Activated naive CD4-positive, alpha-beta T cell treated with anti-CD3 and anti-CD28 coated beads for 36 hours (primary cell): ENCODE measurements at regions of chr1 and their contacts with region 1.

Region 1: GRCh38 chr1:184982002-184982954 is 8.0 kb upstream of the NIBAN1 start:
- DNase-seq: peak; percentile 84
- H3K4me3 Mint-ChIP-seq: no peak overlapping the region
- H3K27ac Mint-ChIP-seq: no peak overlapping the region
- H3K4me1 Mint-ChIP-seq: no peaks in the 10 kb centered on the region
- H3K27me3 Mint-ChIP-seq: peaks cover 17% of the 10 kb centered on the region

Region 2: GRCh38 chr1:184805667-184806295 is 176.5 kb before region 1 on chr1:
- CTCF ChIA-PET with region 1: interaction called, 147 read pairs
- intact Hi-C with region 1: loop called (anchors 1 kb)
- DNase-seq: peak; percentile 90
- H3K4me3 Mint-ChIP-seq: no peak overlapping the region
- H3K27ac Mint-ChIP-seq: peak overlapping the region; percentile 6
- H3K4me1 Mint-ChIP-seq: peaks cover 2% of the 10 kb centered on the region
- H3K27me3 Mint-ChIP-seq: no peaks in the 10 kb centered on the region

Region 3: GRCh38 chr1:184892116-184892515 is 90.2 kb before region 1 on chr1:
- CTCF ChIA-PET with region 1: interaction called, 12 read pairs
- intact Hi-C with region 1: no loop called
- DNase-seq: no peak
- H3K4me3 Mint-ChIP-seq: no peak overlapping the region
- H3K27ac Mint-ChIP-seq: no peak overlapping the region
- H3K4me1 Mint-ChIP-seq: peaks cover 30% of the 10 kb centered on the region
- H3K27me3 Mint-ChIP-seq: peaks cover 3% of the 10 kb centered on the region

Region 4: DNA sequence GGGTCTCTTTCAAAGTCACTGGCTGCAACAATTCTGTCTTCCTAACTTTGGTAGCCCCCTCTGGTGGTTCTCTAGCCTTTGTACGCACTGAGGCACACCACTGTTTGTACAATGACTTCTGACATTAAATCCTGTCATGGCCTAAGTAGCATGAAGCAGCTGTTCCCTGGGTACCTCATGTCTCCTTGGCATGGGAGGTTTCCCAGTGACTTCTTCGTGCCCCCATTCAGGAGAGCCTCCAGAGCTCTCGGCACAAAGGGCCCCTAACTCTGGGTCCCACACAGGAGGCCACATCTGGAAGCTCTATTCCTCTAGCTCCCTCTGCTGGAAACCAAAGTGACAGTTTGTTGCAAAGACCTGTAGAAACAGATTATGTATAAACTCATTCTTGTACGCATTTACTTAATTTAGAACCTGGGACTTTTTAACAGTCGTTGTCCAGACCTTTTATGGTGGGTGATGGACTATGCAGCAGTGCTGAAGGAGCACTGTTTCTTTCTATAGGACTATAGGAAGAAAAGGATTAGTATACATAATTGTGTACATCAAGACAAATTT is 188.1 kb after region 1 on chr1:
- CTCF ChIA-PET with region 1: interaction called, 12 read pairs
- intact Hi-C with region 1: loop called (anchors 1 kb)
- DNase-seq: peak; percentile 60
- H3K4me3 Mint-ChIP-seq: no peak overlapping the region
- H3K27ac Mint-ChIP-seq: peak overlapping the region; percentile 46
- H3K4me1 Mint-ChIP-seq: peaks cover 3% of the 10 kb centered on the region
- H3K27me3 Mint-ChIP-seq: no peaks in the 10 kb centered on the region